WTC11 (cell line): ENCODE measurements at regions of chr6 and their contacts with region 1.

Region 1: DNA sequence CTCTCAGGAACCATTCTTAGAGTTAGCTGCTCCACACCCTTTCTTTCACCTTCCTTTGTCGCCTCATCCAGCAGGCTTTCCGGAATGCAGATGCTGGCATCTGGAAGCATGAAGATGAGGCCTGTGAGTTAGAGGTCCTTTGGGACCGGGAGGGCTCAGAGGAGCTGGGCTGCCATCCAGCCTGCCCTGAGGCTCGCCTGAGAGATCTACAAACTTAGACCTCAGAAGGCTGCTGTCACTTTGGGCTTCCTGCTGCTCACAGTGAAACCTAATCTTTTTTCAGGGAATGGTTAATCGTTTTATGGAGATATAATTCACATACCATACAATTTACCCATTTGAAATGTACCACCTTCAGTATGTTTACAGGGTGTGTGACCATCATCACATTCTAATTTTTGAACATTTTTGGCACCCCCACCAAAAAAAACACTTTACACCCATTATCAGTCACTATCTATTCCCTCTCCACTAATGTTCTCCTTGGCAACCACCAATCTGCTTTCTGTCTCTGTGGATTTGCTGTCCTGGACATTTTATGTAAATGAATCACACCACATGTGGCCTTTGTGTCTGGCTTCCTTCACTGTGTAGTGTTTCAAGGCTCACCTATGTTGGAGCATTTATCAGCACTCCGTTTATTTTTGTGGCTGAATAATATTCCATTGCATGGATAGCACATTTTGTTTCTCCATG is 20.0 kb upstream of the MPC1 start:
- DNase-seq: no peak
- ATAC-seq: no peak
- H3K4me3 Mint-ChIP-seq: no peak overlapping the region
- H3K27ac Mint-ChIP-seq: no peak overlapping the region
- H3K4me1 Mint-ChIP-seq: peaks cover 9% of the 10 kb centered on the region
- H3K27me3 Mint-ChIP-seq: peaks cover 5% of the 10 kb centered on the region
- CTCF ChIP-seq: no peak

Region 2: GRCh38 chr6:166087246-166087645 is 315.5 kb before region 1 on chr6:
- CTCF ChIA-PET with region 1: no interaction called
- POLR2A ChIA-PET with region 1: no interaction called
- DNase-seq: no peak
- ATAC-seq: no peak
- H3K4me3 Mint-ChIP-seq: no peak overlapping the region
- H3K27ac Mint-ChIP-seq: no peak overlapping the region
- H3K4me1 Mint-ChIP-seq: no peaks in the 10 kb centered on the region
- H3K27me3 Mint-ChIP-seq: peaks cover 5% of the 10 kb centered on the region
- CTCF ChIP-seq: no peak

Region 3: GRCh38 chr6:166275714-166276166 is 127.0 kb before region 1 on chr6:
- CTCF ChIA-PET with region 1: interaction called, 57 read pairs
- POLR2A ChIA-PET with region 1: no interaction called
- DNase-seq: peak; percentile 79
- ATAC-seq: peak; percentile 89
- H3K4me3 Mint-ChIP-seq: no peak overlapping the region
- H3K27ac Mint-ChIP-seq: no peak overlapping the region
- H3K4me1 Mint-ChIP-seq: no peaks in the 10 kb centered on the region
- H3K27me3 Mint-ChIP-seq: peaks cover 25% of the 10 kb centered on the region
- CTCF ChIP-seq: peak; percentile 96

Region 4: DNA sequence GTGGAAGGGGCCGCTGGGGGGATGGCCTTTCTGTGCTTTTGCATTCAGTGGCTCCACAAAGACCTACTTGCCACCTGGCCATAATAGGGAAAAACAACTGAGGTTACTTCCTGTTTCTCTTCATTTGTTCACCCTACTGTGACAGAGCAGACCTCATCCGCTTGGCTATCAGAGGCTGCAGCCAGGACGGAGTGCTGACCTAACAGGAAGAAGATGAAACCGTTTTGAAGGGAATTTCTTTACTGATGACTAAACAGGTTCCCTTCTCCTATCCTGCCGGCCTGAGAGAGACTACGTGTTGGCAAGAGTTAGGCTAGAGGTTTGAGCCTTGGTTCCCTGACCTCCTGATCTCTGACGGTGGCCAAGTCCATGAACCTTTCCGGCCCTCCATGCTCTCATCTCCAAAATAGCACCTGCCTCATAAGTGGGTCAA is 115.9 kb before region 1 on chr6:
- CTCF ChIA-PET with region 1: interaction called, 36 read pairs
- POLR2A ChIA-PET with region 1: no interaction called
- DNase-seq: no peak
- ATAC-seq: peak; percentile 83
- H3K4me3 Mint-ChIP-seq: no peak overlapping the region
- H3K27ac Mint-ChIP-seq: peak overlapping the region; percentile 68
- H3K4me1 Mint-ChIP-seq: peaks cover 5% of the 10 kb centered on the region; the same call in 1 of the 2 replicates
- H3K27me3 Mint-ChIP-seq: peaks cover 2% of the 10 kb centered on the region
- CTCF ChIP-seq: no peak

Region 5: DNA sequence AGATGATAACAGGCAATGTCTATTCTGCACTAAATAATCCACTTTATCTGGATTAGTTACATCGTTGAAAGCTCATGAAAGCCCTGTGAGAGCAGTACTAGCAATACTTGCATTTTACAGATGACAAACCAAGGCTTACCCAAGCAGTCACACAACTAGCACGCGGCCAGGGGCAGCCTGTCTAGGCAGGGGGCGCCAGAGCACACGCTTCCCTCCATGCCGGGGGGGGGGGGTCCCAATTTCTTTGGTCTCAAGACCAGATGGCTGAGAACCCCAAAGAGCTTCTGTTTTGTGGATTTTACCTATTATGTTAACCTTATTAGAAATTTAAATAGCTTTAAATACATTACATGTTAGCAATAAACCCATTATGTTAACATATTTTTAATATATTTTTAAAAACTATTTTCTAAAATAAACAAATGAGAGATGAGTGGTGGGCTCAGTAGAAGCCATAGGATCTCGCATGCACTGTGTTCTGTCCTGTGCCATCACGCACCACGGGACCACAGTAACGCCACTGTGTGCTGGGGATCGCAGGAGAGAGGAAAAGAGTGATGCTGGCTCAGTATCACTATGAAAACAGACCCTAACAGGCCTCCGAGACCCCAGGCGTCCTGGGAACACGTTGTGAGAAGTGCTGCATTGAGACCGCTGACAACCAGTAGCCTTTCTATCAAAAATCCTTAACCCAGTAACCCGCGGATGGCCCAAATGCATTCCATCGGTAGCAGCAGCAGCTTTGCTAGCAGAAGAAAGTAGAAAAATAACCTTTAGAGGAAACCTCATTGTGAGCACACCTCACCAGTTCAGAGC is 89.3 kb before region 1 on chr6:
- CTCF ChIA-PET with region 1: interaction called, 36 read pairs
- POLR2A ChIA-PET with region 1: no interaction called
- DNase-seq: peak; percentile 67
- ATAC-seq: peak; percentile 80
- H3K4me3 Mint-ChIP-seq: no peak overlapping the region
- H3K27ac Mint-ChIP-seq: no peak overlapping the region
- H3K4me1 Mint-ChIP-seq: peaks cover 18% of the 10 kb centered on the region
- H3K27me3 Mint-ChIP-seq: peaks cover 25% of the 10 kb centered on the region
- CTCF ChIP-seq: peak; percentile 37; the same call in 1 of the 2 replicates

Region 6: GRCh38 chr6:166330612-166331011 is 72.1 kb before region 1 on chr6:
- CTCF ChIA-PET with region 1: interaction called, 11 read pairs
- POLR2A ChIA-PET with region 1: no interaction called
- DNase-seq: peak; percentile 90
- ATAC-seq: peak; percentile 99
- H3K4me3 Mint-ChIP-seq: peak overlapping the region; percentile 37
- H3K27ac Mint-ChIP-seq: peak overlapping the region; percentile 93
- H3K4me1 Mint-ChIP-seq: peaks cover 55% of the 10 kb centered on the region
- H3K27me3 Mint-ChIP-seq: no peaks in the 10 kb centered on the region
- CTCF ChIP-seq: no peak

Region 7: DNA sequence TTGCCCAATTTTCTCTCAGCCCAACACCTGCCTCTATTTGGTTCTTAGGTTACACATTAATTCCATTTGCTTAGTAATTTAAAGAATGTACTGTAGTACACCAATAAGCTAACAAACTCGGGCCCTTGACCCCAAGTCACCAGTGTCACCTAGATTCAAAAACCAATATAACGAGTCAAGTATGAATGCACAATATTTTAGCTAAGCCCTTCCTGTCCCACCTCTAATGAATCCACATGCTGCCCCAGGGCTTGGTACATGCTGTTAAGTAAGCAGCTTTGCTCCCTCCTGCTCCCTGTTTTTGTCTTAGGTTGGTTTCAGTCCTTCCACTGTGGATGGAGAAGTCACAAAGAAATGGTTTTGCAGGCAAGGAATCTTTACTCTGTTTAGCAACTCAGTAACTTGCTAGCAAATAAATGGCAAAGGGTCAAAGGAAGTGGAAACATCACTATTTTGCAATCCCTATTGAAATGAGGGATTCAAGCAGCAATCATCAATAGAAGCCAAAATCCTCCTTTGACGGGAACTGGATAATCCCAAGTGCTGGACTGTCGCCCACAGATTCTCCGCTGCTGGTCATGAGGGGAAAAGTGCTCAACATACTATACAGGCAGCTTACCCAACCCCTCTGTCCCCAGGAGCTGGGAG is 15.0 kb before region 1 on chr6:
- CTCF ChIA-PET with region 1: interaction called, 17 read pairs
- POLR2A ChIA-PET with region 1: no interaction called
- DNase-seq: no peak
- ATAC-seq: no peak
- H3K4me3 Mint-ChIP-seq: no peak overlapping the region
- H3K27ac Mint-ChIP-seq: no peak overlapping the region
- H3K4me1 Mint-ChIP-seq: peaks cover 11% of the 10 kb centered on the region; the same call in 1 of the 2 replicates
- H3K27me3 Mint-ChIP-seq: no peaks in the 10 kb centered on the region; the same call in 1 of the 2 replicates
- CTCF ChIP-seq: no peak

Region 8: GRCh38 chr6:166450167-166450873 is 47.6 kb after region 1 on chr6:
- CTCF ChIA-PET with region 1: no interaction called
- POLR2A ChIA-PET with region 1: no interaction called
- DNase-seq: no peak
- ATAC-seq: no peak
- H3K4me3 Mint-ChIP-seq: no peak overlapping the region
- H3K27ac Mint-ChIP-seq: no peak overlapping the region
- H3K4me1 Mint-ChIP-seq: no peaks in the 10 kb centered on the region
- H3K27me3 Mint-ChIP-seq: no peaks in the 10 kb centered on the region
- CTCF ChIP-seq: no peak

Region 9: GRCh38 chr6:166462461-166463135 is 59.9 kb after region 1 on chr6:
- CTCF ChIA-PET with region 1: no interaction called
- POLR2A ChIA-PET with region 1: no interaction called
- DNase-seq: no peak
- ATAC-seq: peak; percentile 55
- H3K4me3 Mint-ChIP-seq: no peak overlapping the region
- H3K27ac Mint-ChIP-seq: peak overlapping the region; percentile 32; the same call in 1 of the 2 replicates
- H3K4me1 Mint-ChIP-seq: peaks cover 4% of the 10 kb centered on the region; the same call in 1 of the 2 replicates
- H3K27me3 Mint-ChIP-seq: no peaks in the 10 kb centered on the region
- CTCF ChIP-seq: no peak

Region 10: DNA sequence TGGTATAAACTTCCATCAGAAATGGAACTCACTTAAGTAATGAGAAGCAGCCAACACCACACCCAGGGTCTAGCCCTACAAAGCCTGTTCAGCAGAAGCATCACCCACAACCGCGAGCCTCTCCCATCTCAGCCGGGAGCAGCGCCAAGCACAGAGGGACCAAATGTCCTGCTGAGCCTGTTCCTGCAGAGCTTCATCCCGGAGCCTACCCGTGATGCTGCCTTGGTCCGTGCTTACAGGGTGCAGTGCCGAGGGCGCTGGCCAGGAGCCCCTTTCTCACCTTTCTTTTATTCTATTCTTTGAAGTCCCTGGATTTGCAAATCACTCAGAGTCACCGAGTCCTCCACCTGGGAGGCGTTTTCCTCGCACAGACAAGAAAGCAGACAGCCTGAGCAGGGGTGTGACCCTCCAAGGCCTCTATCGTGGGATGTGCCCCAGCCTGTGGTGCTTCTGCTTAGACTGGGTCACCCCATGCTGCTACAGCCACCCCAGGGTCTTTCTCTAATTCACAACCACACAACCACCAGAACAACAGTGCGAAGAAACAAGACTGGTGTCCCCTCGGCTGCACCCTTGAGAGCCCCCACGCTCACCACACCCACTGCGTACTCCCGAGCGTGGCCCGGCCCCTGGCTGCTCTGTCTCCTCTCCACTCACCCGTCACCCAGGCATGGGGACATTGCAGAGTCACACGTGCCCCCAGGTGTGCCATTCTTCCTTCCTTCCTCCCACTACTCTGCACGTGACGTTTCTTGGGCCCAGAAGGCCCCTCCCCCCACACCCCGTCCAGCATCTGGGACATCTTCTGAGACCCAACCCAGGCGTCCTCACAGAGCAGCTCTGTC is 72.2 kb after region 1 on chr6:
- CTCF ChIA-PET with region 1: no interaction called
- POLR2A ChIA-PET with region 1: no interaction called
- DNase-seq: no peak
- ATAC-seq: no peak
- H3K4me3 Mint-ChIP-seq: no peak overlapping the region
- H3K27ac Mint-ChIP-seq: no peak overlapping the region
- H3K4me1 Mint-ChIP-seq: 0 out of 2 replicates have a peak, but pooled peaks cover 4% of the 10 kb centered on the region
- H3K27me3 Mint-ChIP-seq: no peaks in the 10 kb centered on the region
- CTCF ChIP-seq: no peak